Heart left ventricle (tissue), 16 donors: ENCODE measurements at regions of chr1 and their contacts with region 1.

Region 1: GRCh38 chr1:52697795-52698674 is at the start of gene COA7:
- DNase-seq: peak; percentile 90 to 93 (median 91)
- ATAC-seq: peak; percentile 77 to 92 (median 90)
- H3K4me3 ChIP-seq: peak within 1 kb of the TSS; percentile 33 to 96 (median 76)
- H3K27ac ChIP-seq: peak within 1 kb of the TSS; percentile 47 to 91 (median 84)
- H3K4me1 ChIP-seq: peaks cover 0 to 24% (median 8%) of the 10 kb centered on the region in 12 donors
- H3K27me3 ChIP-seq: no peaks in the 10 kb centered on the region
- CTCF ChIP-seq: no peak
- POLR2A ChIP-seq: peak in 1 of 2 donors; percentile 42
- total RNA-seq, gene COA7: 10.6 to 19.5 (median 16.3) TPM

Region 2: GRCh38 chr1:52056163-52056936 is 641.7 kb before region 1 on chr1 and contains the start of gene BTF3L4:
- intact Hi-C with region 1: loop called in 1 of 10 experiments (anchors 5 kb)
- DNase-seq: peak; percentile 95 to 98 (median 96)
- ATAC-seq: peak; percentile 98
- H3K4me3 ChIP-seq: peak within 1 kb of the TSS; percentile 63 to 97 (median 88)
- H3K27ac ChIP-seq: peak within 1 kb of the TSS; percentile 51 to 97 (median 90)
- H3K4me1 ChIP-seq: peaks cover 3 to 41% (median 34%) of the 10 kb centered on the region in 12 donors
- H3K27me3 ChIP-seq: no peaks in the 10 kb centered on the region
- CTCF ChIP-seq: peak in 1 of 12 donors; percentile 16
- POLR2A ChIP-seq: peak in 1 of 2 donors; percentile 81
- total RNA-seq, gene BTF3L4: 28.9 to 44.2 (median 33.1) TPM

Region 3: GRCh38 chr1:52365746-52366516 is 332.1 kb before region 1 on chr1 and contains the start of gene CC2D1B:
- intact Hi-C with region 1: loop called in 1 of 10 experiments (anchors 5 kb)
- DNase-seq: peak; percentile 98 to 100 (median 99)
- ATAC-seq: peak; percentile 95 to 97 (median 96)
- H3K4me3 ChIP-seq: peak within 1 kb of the TSS; percentile 74 to 99 (median 94)
- H3K27ac ChIP-seq: peak within 1 kb of the TSS; percentile 70 to 97 (median 93)
- H3K4me1 ChIP-seq: peaks cover 0 to 29% (median 11%) of the 10 kb centered on the region in 12 donors
- H3K27me3 ChIP-seq: no peaks in the 10 kb centered on the region
- CTCF ChIP-seq: peak in 7 of 12 donors; percentile 8 to 27 (median 23)
- POLR2A ChIP-seq: peak in 1 of 2 donors; percentile 92
- total RNA-seq, gene CC2D1B: 12.8 to 25.2 (median 16.7) TPM

Region 4: GRCh38 chr1:52552505-52553361 is 145.3 kb before region 1 on chr1 and contains the start of gene TUT4:
- intact Hi-C with region 1: loop called in 1 of 10 experiments (anchors 5 kb)
- DNase-seq: peak; percentile 82 to 90 (median 85)
- ATAC-seq: peak; percentile 89 to 92 (median 91)
- H3K4me3 ChIP-seq: peak within 1 kb of the TSS; percentile 77 to 100 (median 98)
- H3K27ac ChIP-seq: peak within 1 kb of the TSS; percentile 48 to 96 (median 92)
- H3K4me1 ChIP-seq: peaks cover 0 to 30% (median 13%) of the 10 kb centered on the region in 12 donors
- H3K27me3 ChIP-seq: no peaks in the 10 kb centered on the region
- CTCF ChIP-seq: peak in 1 of 12 donors; percentile 32
- POLR2A ChIP-seq: peak in 1 of 2 donors; percentile 35
- total RNA-seq, gene TUT4: 23.7 to 43.8 (median 31.5) TPM

Region 5: GRCh38 chr1:52927212-52928014 is 229.4 kb after region 1 on chr1 and contains the start of gene SCP2:
- intact Hi-C with region 1: loop called in 4 of 10 experiments (anchors 5 to 10 kb)
- DNase-seq: peak; percentile 86 to 94 (median 88)
- ATAC-seq: peak; percentile 89 to 97 (median 96)
- H3K4me3 ChIP-seq: peak within 1 kb of the TSS; percentile 43 to 90 (median 80)
- H3K27ac ChIP-seq: peak within 1 kb of the TSS; percentile 57 to 93 (median 82)
- H3K4me1 ChIP-seq: peaks cover 0 to 33% (median 16%) of the 10 kb centered on the region in 12 donors
- H3K27me3 ChIP-seq: no peaks in the 10 kb centered on the region
- CTCF ChIP-seq: no peak
- POLR2A ChIP-seq: peak in 1 of 2 donors; percentile 64
- total RNA-seq, gene SCP2: 83.4 to 143 (median 132) TPM

Region 6: DNA sequence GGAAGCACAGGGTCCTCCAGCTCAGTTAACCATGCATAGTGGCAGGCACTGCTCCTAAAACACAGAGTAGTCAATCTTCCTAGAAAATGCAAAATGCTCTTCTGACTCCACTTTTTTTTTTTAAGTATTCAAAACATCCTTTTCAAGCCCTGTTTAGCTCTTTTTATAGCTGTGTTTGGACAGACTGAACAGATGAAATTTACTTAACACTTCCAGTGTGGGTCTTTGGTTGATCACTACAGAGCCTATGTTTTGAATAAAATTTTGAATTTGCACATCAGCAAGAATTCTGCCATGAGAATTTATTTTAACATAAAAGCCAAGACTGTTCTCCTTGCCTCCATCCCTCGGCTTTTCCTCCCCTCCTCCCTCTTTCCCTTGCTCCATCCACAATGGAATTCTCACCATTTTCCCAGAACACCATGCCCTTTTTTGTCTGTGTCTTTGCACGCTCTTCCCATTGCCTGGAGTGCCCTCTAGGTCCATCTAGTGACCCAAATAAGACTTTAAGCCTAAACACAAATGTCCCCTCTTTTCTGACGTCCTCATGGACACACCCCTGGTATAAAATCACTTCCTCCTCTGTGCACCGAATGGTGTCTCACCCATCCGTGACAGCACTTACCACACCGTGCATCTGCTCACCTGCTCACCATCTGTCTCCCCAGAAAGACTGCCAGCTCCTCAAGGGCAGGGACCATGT is 474.5 kb after region 1 on chr1:
- intact Hi-C with region 1: loop called in 1 of 10 experiments (anchors 2 kb)
- DNase-seq: no peak
- ATAC-seq: peak; percentile 28 to 47 (median 40)
- H3K4me3 ChIP-seq: no peak overlapping the region
- H3K27ac ChIP-seq: peak overlapping the region in 2 of 12 donors; percentile 13 to 30
- H3K4me1 ChIP-seq: peaks cover 0 to 32% (median 11%) of the 10 kb centered on the region in 12 donors
- H3K27me3 ChIP-seq: no peaks in the 10 kb centered on the region
- CTCF ChIP-seq: peak in 7 of 12 donors; percentile 11 to 43 (median 35)
- POLR2A ChIP-seq: no peak